Right ventricle myocardium superior (tissue), 1 donor: ENCODE measurements at regions of chr11 and their contacts with region 1.

Region 1: DNA sequence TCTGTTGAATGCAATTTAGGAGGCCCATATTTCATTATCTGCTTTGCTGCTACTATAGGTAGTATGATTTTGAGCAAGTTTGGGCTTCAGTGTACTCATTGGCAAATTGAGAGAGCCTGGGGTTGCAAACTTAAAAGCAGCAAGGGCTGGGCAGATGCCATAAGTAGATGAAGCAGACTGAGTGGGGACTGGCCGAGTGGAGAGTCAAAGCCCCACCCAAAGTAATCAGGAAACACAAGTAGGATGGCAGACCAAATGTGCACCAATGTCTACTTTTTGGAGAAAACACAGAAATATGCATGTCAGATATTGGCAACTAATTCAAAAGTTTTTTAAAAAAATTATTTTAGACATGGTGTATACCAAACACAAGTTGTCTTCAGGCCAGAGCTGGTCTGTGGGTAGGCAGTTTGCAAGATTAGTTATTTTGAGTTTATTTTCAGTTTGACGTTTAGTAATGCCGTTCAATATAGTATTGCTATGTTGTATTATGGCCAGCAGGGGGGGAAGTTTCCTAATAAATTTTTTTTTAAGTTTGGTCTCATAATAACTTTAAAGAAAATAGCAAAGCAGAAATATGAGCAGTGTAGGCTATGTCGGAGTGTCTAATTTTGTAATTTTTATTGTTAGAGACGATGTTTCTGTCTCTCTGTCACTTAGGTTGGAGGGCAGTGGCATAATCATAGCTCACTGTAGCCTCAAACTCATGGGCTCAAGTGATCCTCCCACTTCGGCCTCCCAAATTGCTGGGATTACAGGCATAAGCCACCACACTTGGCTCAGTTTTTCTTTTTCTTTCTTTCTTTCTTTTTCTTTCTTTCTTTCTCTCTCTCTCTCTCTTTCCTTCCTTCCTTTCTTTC is 105.1 kb downstream of the HIPK3 start:
- DNase-seq: no peak
- ATAC-seq: peak; percentile 60

Region 2: DNA sequence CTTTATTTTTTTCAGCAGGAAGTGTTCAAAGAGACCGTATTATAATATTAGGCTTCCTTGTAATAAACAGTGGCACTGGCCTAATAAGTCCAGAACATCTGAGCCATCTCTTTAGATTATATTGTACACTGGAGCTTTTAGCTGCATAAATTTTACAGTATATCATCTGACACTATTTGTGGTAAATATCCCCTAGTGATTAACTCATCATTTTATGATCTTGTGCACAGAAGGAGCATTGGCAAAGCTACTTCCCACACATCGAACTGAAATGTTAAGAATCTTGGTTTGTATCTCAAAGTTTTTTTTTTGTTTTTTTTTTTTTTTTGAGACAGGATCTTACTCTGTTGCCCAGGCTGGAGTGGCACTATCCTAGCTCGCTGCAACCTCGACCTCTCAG is 57.6 kb after region 1 on chr11:
- intact Hi-C with region 1: no loop called
- DNase-seq: no peak
- ATAC-seq: no peak

Region 3: GRCh38 chr11:33670250-33671011 is 308.1 kb after region 1 on chr11:
- intact Hi-C with region 1: loop called (anchors 5 kb)
- DNase-seq: no peak
- ATAC-seq: no peak

Region 4: DNA sequence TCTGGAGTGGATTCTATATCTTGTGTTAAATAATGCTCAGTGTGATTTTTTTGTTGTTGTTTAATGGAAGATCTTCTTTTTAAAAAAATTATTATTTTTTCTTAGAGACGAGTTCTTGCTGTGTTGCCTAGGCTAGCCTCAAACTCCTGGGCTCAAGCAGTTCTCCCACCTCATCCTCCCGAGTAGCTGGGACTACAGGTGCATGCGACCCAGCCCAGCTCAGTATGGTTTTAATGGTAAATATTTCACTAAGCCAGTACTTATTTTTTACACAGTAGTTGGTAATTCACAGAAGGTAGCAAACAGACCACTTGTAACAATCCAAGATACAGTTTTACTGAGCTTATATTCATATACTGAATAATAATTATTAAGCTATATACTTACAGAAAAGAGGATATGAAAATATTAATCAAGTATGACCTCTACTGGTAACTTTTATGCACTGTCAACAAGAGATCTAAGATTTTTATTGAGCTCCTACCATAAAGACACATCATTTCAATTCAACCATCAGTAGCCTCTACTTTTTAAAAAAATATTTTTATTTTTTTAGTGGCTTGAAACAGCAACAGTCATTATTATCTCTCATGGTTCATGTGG is 380.1 kb after region 1 on chr11:
- intact Hi-C with region 1: loop called (anchors 10 kb)
- DNase-seq: no peak
- ATAC-seq: peak; percentile 55